Aorta (tissue), 5 donors: ENCODE measurements at regions of chr14 and their contacts with region 1.

Region 1: DNA sequence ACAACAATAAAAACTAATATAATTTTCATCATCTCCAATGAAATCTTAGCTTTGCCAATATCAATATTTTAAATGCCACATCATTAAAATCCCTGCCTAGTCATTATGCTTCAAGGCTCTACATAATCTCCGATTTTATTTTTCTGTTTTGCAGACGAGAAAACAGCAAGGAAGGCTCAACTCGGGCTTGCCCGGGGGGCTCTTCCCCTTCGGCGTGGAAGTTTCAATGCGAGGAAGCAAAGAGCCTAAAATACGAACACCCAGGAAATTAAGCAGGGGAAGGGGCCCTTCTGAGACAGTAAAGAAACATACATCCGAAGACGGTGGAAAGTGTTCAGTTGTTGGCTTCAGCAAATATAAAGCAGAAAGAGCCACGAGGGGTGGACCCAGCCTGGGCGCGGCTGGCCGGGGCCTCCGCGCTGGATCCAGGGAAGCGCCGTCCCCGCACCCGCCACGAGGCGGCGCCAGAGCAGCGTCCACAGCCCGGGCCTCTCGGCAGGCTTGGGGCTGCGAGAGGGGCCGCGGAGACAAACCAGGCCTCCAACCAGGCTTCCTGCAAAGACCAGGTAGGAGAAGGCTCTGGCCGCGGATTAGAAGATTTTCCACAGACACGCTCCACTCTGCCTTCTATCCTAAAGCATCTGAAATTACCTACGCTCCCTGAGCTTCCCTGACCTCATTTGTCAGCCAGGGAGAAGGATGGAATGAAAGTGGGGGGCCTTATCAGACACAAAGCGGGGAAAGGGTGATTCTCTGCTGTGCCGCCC is 77.2 kb downstream of the SERPINA3 start:
- DNase-seq: peak; percentile 72 to 88
- ATAC-seq: peak; percentile 89
- H3K4me3 ChIP-seq: no peak overlapping the region
- H3K27ac ChIP-seq: no peak overlapping the region
- H3K4me1 ChIP-seq: no peaks in the 10 kb centered on the region
- H3K27me3 ChIP-seq: no peaks in the 10 kb centered on the region

Region 2: DNA sequence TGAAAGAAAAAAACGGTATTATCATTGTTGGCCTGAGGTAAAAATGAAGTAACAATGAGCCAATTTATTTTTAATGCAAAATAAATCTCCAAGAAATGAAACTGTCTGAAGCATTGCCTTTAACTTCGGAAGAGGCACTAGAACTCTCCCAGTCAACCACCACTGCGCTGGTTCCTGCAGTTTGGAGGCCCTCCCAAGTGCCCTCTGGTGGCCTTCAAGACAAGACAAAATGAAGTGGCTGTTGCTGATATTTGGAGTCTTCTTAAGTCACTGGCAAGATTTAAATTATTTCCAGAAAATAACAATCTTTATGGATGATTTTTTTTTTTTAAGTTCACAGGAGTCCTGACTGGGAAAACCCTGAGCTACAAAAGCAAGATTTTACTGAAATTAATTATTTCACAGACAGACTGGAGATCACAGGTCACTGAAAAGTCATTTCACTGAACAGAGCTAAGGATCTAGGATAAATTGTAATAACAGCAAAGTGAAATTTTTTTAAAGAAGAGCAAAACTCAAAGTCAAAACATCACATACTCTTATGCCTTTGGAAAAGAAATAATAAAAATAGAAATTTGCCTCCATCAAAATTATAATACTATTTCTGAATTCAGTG is 409.7 kb after region 1 on chr14:
- intact Hi-C with region 1: loop called (anchors 10 kb)
- DNase-seq: peak in 1 of 2 donors; percentile 73
- ATAC-seq: peak; percentile 78
- H3K4me3 ChIP-seq: no peak overlapping the region
- H3K27ac ChIP-seq: no peak overlapping the region
- H3K4me1 ChIP-seq: peaks cover 0 to 2% of the 10 kb centered on the region in 2 donors
- H3K27me3 ChIP-seq: no peaks in the 10 kb centered on the region

Region 3: DNA sequence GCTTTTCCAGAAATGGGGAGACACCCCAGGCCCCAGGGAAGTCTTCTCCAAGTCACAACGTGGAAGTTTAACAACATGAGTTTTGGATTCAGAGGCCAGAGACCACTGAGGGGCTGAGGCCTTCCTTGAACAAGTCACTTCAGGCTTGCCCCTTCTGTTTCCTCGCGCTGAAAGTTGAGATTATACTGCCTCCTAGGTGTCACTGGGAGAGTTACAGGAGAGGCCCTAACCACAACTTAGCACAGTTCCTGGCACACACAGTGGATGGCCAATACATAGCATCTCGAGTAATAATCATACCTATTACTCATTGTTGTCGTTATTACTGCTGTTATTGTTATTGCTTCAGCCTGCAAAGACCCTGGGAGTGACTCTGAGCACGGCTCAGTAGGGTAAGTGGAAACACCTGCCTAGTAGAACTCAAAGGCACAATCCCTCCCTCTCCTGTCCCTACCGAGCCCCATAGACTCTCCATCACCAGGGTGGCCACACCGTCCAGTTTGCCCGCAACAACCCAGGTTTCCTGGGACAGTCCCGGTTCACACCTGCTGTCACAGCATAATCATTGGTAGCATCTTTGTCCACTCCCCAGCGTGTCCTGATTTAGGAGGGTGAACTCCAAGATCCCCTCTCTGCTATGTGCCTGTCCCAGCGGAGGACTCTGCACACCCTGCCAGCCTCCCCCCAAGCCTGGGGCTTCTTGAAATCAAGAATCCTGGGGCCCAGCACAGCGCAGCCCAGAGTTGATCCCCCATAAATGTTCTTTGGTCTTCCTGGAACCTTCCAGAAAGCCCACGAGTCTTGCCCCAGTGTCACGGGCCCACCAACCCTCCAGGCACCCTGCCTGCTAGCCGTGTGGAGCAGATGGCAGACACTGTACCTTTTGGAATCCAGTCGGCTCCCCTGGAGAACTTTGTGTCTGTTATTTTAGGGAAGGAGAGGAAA is 742.1 kb after region 1 on chr14:
- intact Hi-C with region 1: loop called in 1 of 2 experiments (anchors 2 kb)
- DNase-seq: peak; percentile 23 to 64
- ATAC-seq: peak; percentile 71
- H3K4me3 ChIP-seq: no peak overlapping the region
- H3K27ac ChIP-seq: no peak overlapping the region
- H3K4me1 ChIP-seq: no peaks in the 10 kb centered on the region
- H3K27me3 ChIP-seq: no peaks in the 10 kb centered on the region